GM10248 (cell line): ENCODE measurements at regions of chr9 and their contacts with region 1.

Region 1: DNA sequence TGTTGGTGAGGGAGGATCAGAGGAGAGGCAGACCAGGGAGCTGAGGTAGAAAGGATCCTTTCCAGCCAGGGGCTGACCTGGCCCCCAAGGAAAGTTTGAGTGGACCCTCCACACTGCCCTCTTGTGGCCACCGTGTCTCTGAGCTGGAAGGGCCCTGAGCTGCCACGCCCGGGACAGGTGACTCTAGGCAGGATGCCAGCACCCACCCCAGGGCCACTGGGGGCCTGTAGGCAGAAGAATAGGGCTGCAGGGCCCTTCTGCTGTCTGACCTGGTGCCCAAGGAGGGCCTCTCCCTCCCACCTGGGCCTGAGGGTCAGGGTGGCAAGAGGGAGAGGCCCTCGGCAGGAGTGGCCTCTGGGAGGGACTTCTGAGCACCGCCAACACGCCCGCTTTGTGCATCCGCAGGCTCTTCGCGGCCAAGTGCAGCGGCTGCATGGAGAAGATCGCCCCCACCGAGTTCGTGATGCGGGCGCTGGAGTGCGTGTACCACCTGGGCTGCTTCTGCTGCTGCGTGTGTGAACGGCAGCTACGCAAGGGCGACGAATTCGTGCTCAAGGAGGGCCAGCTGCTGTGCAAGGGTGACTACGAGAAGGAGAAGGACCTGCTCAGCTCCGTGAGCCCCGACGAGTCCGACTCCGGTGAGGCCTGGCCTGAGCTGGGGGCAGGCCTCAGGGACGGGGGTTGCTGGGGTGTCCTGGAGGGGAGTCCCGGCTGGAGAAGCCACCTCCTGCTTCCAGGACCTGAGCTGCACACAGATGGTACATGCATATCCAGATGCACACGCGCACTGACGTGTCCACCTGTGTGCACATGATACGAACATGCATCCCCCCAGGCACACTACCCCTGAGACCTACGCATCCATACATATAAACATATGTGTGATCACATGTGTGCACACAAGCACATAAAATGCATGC is 77.0 kb downstream of the LMX1B start:
- DNase-seq: peak; percentile 79
- CTCF ChIP-seq: peak; percentile 65

Region 2: GRCh38 chr9:126386088-126386487 is 304.6 kb before region 1 on chr9:
- CTCF ChIA-PET with region 1: no interaction called
- POLR2A ChIA-PET with region 1: no interaction called
- DNase-seq: no peak
- CTCF ChIP-seq: peak; percentile 19

Region 3: DNA sequence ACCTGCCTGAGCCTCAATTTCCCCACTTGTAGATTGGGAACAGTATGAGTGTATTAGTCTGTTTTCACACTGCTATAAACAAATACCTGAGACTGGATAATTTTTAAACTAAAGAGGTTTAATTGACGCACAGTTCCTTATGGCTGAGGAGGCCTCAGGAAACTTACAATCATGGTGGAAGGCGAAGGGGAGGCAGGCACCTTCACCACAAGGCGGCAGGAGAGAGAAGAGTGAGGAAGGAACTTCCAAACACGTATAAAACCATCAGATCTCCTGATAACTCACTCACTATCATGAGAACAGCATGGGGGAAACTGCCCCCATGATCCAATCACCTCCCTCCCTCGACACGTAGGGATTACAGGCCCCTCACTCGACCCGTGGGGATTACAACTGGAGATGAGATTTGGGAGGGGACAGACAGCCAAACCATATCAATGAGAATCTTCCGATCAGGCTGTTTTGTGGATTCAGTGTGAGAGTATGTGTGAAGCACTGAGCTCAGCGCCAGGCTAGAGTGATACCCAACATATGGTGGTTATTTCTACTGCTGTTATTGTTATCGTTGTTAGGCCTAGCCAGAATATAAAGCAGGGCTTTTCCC is 91.5 kb before region 1 on chr9:
- CTCF ChIA-PET with region 1: no interaction called
- POLR2A ChIA-PET with region 1: no interaction called
- DNase-seq: no peak
- CTCF ChIP-seq: no peak

Region 4: DNA sequence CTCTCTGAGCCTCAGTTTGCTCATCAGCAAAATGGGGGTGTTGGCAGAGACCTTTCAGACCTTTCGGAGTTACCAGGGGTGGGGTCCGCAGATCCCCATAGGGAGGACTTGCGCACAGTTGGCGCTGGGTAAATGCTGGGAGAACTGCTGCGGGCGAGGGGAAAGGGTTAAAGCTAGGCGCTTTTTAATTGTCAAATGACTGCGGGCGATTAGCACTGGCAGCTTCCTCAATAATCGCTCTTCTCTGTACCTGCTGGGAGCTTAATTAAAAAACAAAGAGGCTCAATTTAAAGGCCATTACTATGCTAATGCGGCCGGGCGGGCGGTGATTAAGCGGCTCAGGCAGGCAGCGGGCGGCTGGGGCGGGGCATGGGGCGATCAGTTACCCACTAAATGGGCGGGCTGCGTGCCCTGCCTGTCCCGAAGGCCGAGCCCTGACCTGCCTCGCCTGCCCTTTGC is 14.0 kb before region 1 on chr9:
- CTCF ChIA-PET with region 1: interaction called, 32 read pairs
- POLR2A ChIA-PET with region 1: no interaction called
- DNase-seq: no peak
- CTCF ChIP-seq: no peak

Region 5: DNA sequence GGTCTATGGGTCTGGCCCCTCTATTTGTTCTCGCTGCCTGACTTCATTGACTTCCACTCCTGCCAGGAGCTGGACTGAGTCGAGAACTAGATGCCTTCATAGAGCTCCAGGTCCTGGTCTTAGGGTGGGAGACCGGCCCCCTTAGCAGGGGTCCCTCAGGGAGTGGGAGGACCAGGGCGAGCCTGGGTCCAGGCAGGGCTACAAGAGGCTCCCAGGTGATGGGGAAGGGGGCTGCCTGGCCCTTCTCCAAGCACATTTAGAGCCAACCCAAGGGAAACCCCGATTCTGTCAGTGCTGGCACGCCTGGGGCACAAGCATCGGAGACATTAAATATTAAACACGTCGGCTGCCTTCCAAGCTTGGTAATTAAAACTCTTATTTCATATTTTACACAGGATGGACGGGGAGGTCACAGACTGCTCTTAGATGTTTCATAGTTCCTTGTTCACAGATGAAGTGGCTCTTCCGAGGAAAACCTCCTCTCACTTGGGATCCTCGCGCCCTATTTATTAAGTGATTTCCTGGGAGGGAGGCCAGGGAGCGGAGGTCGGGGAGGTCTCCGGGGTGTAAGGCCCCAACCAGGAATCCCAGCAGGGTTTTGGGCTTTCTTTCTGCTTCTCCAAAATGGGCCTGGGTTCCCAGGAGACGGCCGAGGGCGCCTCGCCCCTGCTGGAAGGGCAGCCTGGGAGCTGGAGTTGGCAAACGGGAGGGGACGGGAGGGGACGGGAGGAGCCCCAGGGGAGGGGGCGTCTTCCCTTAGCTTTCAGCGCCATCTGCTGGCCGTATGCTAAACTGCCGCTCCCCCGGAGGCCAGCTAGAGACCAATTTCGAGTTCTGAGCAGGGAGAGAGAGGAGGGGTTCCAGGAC is 90.7 kb after region 1 on chr9:
- CTCF ChIA-PET with region 1: interaction called, 12 read pairs
- POLR2A ChIA-PET with region 1: interaction called, 3 read pairs
- DNase-seq: peak; percentile 84
- CTCF ChIP-seq: peak; percentile 97